Cardiac septum (tissue), 1 donor: ENCODE measurements at regions of chr13 and their contacts with region 1.

Region 1: DNA sequence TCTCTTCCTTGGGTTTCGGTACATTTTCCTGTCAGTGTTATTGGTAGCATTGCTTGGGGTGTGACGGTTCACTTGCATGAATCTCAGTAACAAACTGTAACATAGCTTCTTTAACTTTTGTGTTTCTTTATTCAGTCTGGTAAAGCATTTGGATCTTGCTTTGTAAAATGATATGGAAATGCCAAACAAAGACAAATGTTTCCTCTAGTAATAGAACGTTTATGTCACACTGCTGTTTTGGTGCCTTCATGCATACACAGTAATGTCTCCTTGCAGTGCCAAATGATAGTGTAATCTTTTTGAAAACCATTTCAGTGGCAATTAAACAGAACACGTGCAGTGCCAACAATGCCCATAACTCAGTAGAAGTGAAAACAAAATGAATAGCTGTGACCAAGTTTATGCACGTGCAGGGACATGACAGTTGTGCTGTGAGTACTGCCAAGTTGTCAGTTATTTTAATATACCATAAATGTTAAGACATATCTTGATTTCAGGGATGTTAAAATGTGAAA is 110.8 kb downstream of the RXFP2 start:
- DNase-seq: no peak

Region 2: GRCh38 chr13:31891472-31891871 is 41.4 kb after region 1 on chr13:
- intact Hi-C with region 1: loop called (anchors 2 kb)
- DNase-seq: no peak

Region 3: GRCh38 chr13:31956980-31957644 is 107.0 kb after region 1 on chr13:
- intact Hi-C with region 1: no loop called
- DNase-seq: no peak